ENCODE measurements at regions of chr19 and their contacts with region 1.

Region 1: GRCh38 chr19:35213663-35214632 is 14.6 kb downstream of the FAM187B start:
- DNase-seq: peak; percentile 89 to 96 (median 93)
- H3K4me3 ChIP-seq: peak overlapping the region in 1 of 2 donors; percentile 17
- H3K4me3 Mint-ChIP-seq: peak overlapping the region; percentile 30 to 85 (median 76)
- H3K27ac ChIP-seq: peak overlapping the region; percentile 98
- H3K27ac Mint-ChIP-seq: peak overlapping the region; percentile 98 to 100 (median 100)
- H3K4me1 ChIP-seq: peaks cover 84% of the 10 kb centered on the region
- H3K4me1 Mint-ChIP-seq: peaks cover 40 to 78% (median 61%) of the 10 kb centered on the region in 4 donors
- H3K27me3 ChIP-seq: no peaks in the 10 kb centered on the region
- H3K27me3 Mint-ChIP-seq: no peaks in the 10 kb centered on the region

Region 2: GRCh38 chr19:35114353-35115176 is 99.4 kb before region 1 on chr19:
- CTCF ChIA-PET with region 1: interaction called, 4 read pairs
- POLR2A ChIA-PET with region 1: interaction called, 3 read pairs
- intact Hi-C with region 1: loop called (anchors 1 kb)
- DNase-seq: peak; percentile 56 to 64 (median 58)
- H3K4me3 ChIP-seq: no peak overlapping the region
- H3K4me3 Mint-ChIP-seq: peak overlapping the region in 2 of 8 donors; percentile 25 to 36
- H3K27ac ChIP-seq: no peak overlapping the region
- H3K27ac Mint-ChIP-seq: peak overlapping the region in 4 of 7 donors; percentile 30 to 77 (median 60)
- H3K4me1 ChIP-seq: peaks cover 9% of the 10 kb centered on the region
- H3K4me1 Mint-ChIP-seq: peaks cover 4 to 7% (median 5%) of the 10 kb centered on the region in 4 donors
- H3K27me3 ChIP-seq: no peaks in the 10 kb centered on the region
- H3K27me3 Mint-ChIP-seq: peaks cover 5 to 11% of the 10 kb centered on the region in 2 donors

Region 3: DNA sequence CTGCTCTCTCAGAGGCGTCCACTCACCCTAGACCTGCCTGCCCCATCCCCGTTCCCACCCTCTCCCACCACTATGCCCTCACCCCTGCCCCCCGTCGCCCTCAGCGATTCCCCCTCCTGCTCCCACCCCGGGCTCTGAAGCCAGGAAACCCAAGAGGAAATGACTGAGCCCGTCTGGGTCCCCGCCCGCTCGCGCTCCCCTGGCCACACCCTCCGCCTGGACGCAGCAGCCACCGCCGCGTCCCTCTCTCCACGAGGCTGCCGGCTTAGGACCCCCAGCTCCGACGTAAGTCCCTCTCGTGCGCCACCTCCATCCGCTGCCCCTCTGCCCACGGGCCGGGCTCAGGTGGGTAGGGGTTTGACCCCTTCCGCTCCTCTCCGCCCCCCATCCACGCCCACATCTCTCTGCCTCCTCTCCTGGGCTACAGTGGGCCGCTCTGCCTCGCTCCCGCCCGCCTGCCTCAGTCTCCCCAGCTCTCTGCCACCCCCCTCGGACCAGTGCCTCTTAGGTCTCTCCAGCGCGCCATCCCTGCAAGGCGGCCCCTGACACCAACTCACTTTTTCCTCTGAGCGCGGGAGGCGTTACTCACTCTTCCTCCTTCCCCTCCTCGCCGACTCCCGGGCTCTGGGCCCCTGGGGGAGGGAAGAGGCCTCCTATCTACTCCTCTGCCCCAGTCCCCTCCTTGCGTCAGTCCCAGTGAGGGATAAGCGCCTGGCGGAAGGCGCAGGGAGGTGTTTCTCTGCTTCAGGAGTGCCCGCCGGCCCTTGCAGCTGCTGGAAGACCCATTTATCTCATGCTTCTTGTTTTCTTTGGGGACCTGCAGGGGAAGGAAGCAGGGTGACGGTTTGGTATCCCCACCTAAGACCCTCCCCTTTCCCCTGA is 59.2 kb before region 1 on chr19 and contains the start of gene FXYD5:
- CTCF ChIA-PET with region 1: interaction called, 10 read pairs
- POLR2A ChIA-PET with region 1: interaction called, 126 read pairs
- intact Hi-C with region 1: loop called (anchors 1 kb)
- DNase-seq: peak; percentile 60 to 84 (median 64)
- H3K4me3 ChIP-seq: peak within 1 kb of the TSS; percentile 91 to 95
- H3K4me3 Mint-ChIP-seq: peak within 1 kb of the TSS; percentile 98 to 100 (median 99)
- H3K27ac ChIP-seq: peak within 1 kb of the TSS; percentile 91
- H3K27ac Mint-ChIP-seq: peak within 1 kb of the TSS; percentile 98 to 99 (median 99)
- H3K4me1 ChIP-seq: peaks cover 56% of the 10 kb centered on the region
- H3K4me1 Mint-ChIP-seq: peaks cover 35 to 68% (median 46%) of the 10 kb centered on the region in 4 donors
- H3K27me3 ChIP-seq: no peaks in the 10 kb centered on the region
- H3K27me3 Mint-ChIP-seq: no peaks in the 10 kb centered on the region
- total RNA-seq, gene FXYD5: 473 to 484 TPM

Region 4: GRCh38 chr19:35195830-35196229 is 18.1 kb before region 1 on chr19:
- CTCF ChIA-PET with region 1: interaction called, 5 read pairs
- POLR2A ChIA-PET with region 1: interaction called, 23 read pairs
- intact Hi-C with region 1: loop called (anchors 2 kb)
- DNase-seq: no peak
- H3K4me3 ChIP-seq: no peak overlapping the region
- H3K4me3 Mint-ChIP-seq: no peak overlapping the region
- H3K27ac ChIP-seq: no peak overlapping the region
- H3K27ac Mint-ChIP-seq: no peak overlapping the region
- H3K4me1 ChIP-seq: peaks cover 9% of the 10 kb centered on the region
- H3K4me1 Mint-ChIP-seq: peaks cover 13 to 28% (median 22%) of the 10 kb centered on the region in 4 donors
- H3K27me3 ChIP-seq: no peaks in the 10 kb centered on the region
- H3K27me3 Mint-ChIP-seq: no peaks in the 10 kb centered on the region

Region 5: DNA sequence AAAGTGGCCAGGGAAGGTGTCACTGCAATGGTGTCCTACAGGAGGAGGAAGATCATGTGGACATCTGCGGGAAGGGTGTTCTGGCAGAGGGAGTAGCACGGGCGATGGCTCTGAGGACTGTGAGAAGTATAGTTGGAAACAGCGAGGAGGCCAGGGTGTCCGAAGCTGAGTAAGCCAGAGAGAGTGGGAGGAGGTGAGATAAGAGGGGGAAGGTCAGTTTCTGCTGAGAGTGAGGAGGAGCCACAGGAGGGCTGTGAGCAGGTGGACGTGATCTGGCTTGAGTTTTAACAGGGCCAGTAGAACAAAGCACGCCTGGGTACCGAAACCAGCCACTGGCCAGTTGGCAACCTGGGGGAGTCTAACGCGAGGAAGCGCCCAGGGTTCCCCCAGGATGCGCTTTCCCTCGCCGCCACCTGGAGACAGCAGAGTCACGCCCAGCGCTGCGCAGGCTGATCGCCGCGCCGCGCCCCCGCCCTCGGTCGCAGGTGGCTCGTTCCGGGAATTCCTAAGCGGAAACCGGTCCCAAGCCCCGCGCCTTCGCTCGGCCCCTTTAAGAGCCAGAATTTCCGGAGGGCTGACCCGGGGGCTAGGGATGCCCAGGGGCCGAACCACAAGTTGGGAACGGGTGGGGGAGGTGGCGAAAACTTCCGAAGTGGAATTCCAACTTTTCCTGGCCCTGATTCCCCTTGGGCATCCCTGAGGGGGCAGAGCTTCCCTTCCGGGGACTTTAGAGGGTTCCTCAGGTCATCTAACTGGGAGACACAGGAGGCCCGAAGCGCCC is 33.8 kb after region 1 on chr19:
- CTCF ChIA-PET with region 1: interaction called, 3 read pairs
- POLR2A ChIA-PET with region 1: interaction called, 217 read pairs
- intact Hi-C with region 1: loop called (anchors 1 kb)
- DNase-seq: peak in 4 of 5 donors; percentile 48 to 53 (median 51)
- H3K4me3 ChIP-seq: peak overlapping the region; percentile 94
- H3K4me3 Mint-ChIP-seq: peak overlapping the region; percentile 91 to 94 (median 93)
- H3K27ac ChIP-seq: peak overlapping the region; percentile 61
- H3K27ac Mint-ChIP-seq: peak overlapping the region; percentile 88 to 97 (median 91)
- H3K4me1 ChIP-seq: peaks cover 24% of the 10 kb centered on the region
- H3K4me1 Mint-ChIP-seq: peaks cover 18 to 52% (median 32%) of the 10 kb centered on the region in 4 donors
- H3K27me3 ChIP-seq: no peaks in the 10 kb centered on the region
- H3K27me3 Mint-ChIP-seq: no peaks in the 10 kb centered on the region

Region 6: DNA sequence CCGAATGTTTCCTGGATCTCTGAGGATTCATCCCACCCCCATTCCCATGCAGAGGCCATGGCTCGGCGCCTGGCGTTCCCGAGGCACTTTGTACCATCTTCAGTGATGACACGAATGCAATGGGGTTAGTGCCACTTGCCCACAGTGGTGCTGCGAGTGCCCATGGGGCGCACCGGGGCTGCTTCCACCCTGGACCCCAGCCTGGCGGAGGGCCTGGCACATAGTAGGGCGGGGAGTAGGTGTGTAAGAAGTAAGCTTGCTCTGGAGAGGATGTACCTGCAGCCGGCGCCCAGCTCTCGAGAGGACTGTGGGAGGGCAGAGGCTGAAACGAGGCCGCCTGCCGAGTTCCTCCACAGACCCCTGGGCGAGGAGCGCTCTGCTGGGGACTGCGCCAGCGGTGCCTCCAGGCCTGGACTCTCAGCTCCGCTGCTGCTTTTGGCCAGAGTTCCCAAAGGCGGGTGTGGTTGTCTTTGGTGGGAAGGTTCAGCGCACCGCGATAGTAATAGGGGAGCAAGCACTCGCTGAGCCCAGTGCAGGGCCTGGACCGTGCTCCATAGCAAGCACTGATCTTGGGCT is 62.8 kb after region 1 on chr19:
- CTCF ChIA-PET with region 1: no interaction called
- POLR2A ChIA-PET with region 1: no interaction called
- intact Hi-C with region 1: no loop called
- DNase-seq: no peak
- H3K4me3 ChIP-seq: no peak overlapping the region
- H3K4me3 Mint-ChIP-seq: no peak overlapping the region
- H3K27ac ChIP-seq: no peak overlapping the region
- H3K27ac Mint-ChIP-seq: peak overlapping the region in 2 of 7 donors; percentile 10 to 21
- H3K4me1 ChIP-seq: peaks cover 3% of the 10 kb centered on the region
- H3K4me1 Mint-ChIP-seq: peaks cover 11 to 27% (median 17%) of the 10 kb centered on the region in 4 donors
- H3K27me3 ChIP-seq: no peaks in the 10 kb centered on the region
- H3K27me3 Mint-ChIP-seq: no peaks in the 10 kb centered on the region

Region 7: DNA sequence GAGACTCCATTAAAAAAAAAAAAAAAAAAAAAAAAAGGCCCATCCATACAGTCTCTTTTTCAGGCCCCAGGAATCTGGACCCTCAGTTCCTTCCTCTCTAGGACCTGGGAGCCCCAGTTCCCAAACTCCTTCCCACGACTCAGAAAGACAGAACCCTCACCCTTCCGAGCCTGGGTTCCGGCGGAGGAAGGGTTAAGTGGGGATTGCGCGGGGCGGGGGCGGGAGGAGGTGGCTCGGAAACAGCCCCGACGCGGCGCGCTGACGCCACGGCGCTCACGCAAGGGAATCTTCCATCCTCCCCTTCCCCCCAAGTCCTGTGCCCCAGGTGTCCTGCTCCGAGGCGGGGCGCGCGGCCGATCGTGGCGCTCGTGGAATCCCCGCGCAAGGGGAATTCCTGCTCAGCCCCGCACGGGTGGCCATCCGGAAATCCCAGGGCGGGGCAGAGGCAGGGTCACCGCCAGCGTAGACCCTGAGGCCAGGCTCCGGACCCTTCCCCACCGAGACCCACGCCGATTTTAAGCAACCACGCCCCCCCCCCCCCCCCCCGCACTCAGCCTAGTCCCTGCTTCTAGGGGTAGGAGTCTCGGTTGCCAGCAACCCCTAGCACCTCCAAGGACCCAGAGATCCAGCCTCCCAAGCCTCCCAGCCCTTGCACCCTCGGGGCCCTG is 685.7 kb after region 1 on chr19:
- CTCF ChIA-PET with region 1: no interaction called
- POLR2A ChIA-PET with region 1: no interaction called
- intact Hi-C with region 1: loop called (anchors 5 kb)
- DNase-seq: peak; percentile 86 to 94 (median 88)
- H3K4me3 ChIP-seq: peak overlapping the region; percentile 52 to 96
- H3K4me3 Mint-ChIP-seq: peak overlapping the region; percentile 94 to 100 (median 98)
- H3K27ac ChIP-seq: peak overlapping the region; percentile 100
- H3K27ac Mint-ChIP-seq: peak overlapping the region; percentile 92 to 99 (median 98)
- H3K4me1 ChIP-seq: peaks cover 67% of the 10 kb centered on the region
- H3K4me1 Mint-ChIP-seq: peaks cover 23 to 73% (median 53%) of the 10 kb centered on the region in 4 donors
- H3K27me3 ChIP-seq: no peaks in the 10 kb centered on the region
- H3K27me3 Mint-ChIP-seq: no peaks in the 10 kb centered on the region